ENCODE measurements at regions of chr15 and their contacts with region 1.

Region 1: GRCh38 chr15:90660195-90660998 is 56.7 kb upstream of the BLM start:
- DNase-seq: peak in 1 of 5 donors; percentile 60
- H3K4me3 ChIP-seq: no peak overlapping the region
- H3K27ac ChIP-seq: no peak overlapping the region
- H3K4me1 ChIP-seq: peaks cover 4% of the 10 kb centered on the region
- H3K27me3 ChIP-seq: no peaks in the 10 kb centered on the region
- CTCF ChIP-seq: no peak
- EP300 ChIP-seq: no peak
- POLR2A ChIP-seq: no peak

Region 2: DNA sequence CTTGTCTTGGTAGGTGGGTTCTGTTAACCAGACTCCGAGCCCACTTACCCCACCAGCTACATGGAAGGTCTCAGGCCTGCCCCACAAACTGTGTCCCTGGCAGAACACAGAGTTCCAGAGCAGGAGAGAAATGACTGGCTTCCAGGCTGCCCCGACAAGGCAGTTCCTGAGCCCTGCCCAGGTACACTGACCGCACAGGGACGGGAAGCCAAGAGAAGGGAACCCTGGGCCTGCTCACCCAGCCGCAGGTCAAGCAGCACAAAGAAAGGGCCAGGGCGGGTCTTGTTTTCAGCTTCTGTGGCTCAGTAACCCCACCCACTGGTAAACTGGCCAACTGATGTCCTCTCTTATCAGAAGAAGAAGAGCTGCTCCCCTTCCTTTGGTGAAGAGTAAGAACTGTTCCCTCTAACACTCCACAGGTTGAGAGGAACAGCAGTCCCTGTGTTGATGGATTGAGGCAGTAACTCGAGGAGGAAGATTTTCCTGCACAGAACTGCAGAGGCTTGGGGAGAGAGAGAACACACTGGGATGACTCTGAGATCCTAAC is 62.3 kb before region 1 on chr15:
- intact Hi-C with region 1: no loop called
- DNase-seq: peak in 4 of 5 donors; percentile 57 to 71 (median 65)
- H3K4me3 ChIP-seq: no peak overlapping the region
- H3K27ac ChIP-seq: peak overlapping the region in 1 of 2 donors; percentile 62
- H3K4me1 ChIP-seq: peaks cover 22% of the 10 kb centered on the region
- H3K27me3 ChIP-seq: no peaks in the 10 kb centered on the region
- CTCF ChIP-seq: no peak
- EP300 ChIP-seq: no peak
- POLR2A ChIP-seq: no peak

Region 3: GRCh38 chr15:90681480-90681879 is 21.1 kb after region 1 on chr15:
- intact Hi-C with region 1: loop called in 1 of 4 experiments (anchors 1 kb)
- DNase-seq: no peak
- H3K4me3 ChIP-seq: no peak overlapping the region
- H3K27ac ChIP-seq: no peak overlapping the region
- H3K4me1 ChIP-seq: peaks cover 2% of the 10 kb centered on the region
- H3K27me3 ChIP-seq: no peaks in the 10 kb centered on the region
- CTCF ChIP-seq: no peak
- EP300 ChIP-seq: no peak
- POLR2A ChIP-seq: no peak